ENCODE measurements at regions of chr3 and their contacts with region 1.

Region 1: DNA sequence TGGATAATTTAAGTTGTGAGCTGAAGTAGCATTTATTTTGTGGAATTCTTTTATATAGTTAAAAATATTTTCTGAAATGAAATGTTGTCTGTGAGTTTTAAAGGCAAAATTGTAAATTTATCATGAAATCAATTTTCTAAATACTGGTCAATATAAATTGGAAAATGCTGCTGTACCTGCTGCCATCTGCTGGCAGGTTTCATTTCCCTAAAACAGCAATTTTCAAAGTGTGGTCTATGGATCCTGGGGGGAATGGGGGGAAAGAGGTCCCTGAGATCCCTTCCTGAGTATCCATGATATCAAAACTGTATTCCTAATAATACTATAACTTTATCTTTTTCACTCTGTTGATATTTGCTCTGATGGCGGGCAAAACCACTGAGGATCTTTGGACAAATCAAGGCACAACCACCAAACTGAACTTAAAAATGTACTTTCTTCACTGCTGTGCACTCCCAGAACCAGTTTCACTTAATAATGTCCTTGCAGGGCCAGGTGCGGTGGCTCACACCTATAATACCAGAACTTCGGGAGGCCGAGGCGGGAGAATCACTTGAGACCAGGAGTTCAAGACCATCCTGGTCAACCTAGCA is 17.2 kb upstream of the CCR4 start:
- DNase-seq: peak; percentile 40
- H3K4me3 ChIP-seq: no peak overlapping the region
- H3K27ac ChIP-seq: no peak overlapping the region
- H3K4me1 ChIP-seq: no peaks in the 10 kb centered on the region
- H3K27me3 ChIP-seq: no peaks in the 10 kb centered on the region
- CTCF ChIP-seq: peak; percentile 81

Region 2: GRCh38 chr3:32510075-32510724 is 424.0 kb before region 1 on chr3:
- CTCF ChIA-PET with region 1: interaction called, 6 read pairs
- POLR2A ChIA-PET with region 1: no interaction called
- intact Hi-C with region 1: loop called (anchors 5 kb)
- DNase-seq: peak; percentile 71
- H3K4me3 ChIP-seq: no peak overlapping the region
- H3K27ac ChIP-seq: no peak overlapping the region
- H3K4me1 ChIP-seq: no peaks in the 10 kb centered on the region
- H3K27me3 ChIP-seq: no peaks in the 10 kb centered on the region
- CTCF ChIP-seq: peak; percentile 75

Region 3: DNA sequence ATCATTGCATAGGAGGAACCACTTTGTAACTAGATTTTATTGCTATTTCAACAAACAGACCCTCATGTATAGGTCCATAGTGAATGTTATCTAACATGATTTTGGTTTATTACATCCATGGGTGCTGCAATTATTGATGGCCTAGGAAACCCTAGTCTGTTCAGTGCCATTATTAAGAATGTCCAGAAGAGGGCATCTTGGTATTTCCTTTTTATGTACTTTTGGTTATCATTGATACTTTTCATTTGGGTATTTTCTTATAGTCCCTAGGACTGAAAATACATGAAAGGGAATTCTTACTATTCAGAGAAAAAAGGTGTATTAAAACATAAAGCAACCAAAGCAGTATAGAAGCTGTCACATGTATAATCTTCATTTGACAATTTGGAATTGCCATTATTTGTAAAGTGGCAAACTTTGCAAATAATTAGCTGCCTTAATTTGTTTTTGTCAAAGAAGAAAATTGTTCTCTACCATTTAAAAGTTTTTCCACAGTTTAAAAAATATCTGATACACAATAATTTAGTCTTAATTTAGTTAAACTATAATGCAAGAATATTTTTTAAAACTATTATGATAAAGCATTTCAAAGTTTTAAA is 200.5 kb before region 1 on chr3:
- CTCF ChIA-PET with region 1: no interaction called
- POLR2A ChIA-PET with region 1: no interaction called
- intact Hi-C with region 1: loop called (anchors 1 kb)
- DNase-seq: peak; percentile 57
- H3K4me3 ChIP-seq: no peak overlapping the region
- H3K27ac ChIP-seq: no peak overlapping the region
- H3K4me1 ChIP-seq: no peaks in the 10 kb centered on the region
- H3K27me3 ChIP-seq: no peaks in the 10 kb centered on the region
- CTCF ChIP-seq: peak; percentile 66

Region 4: GRCh38 chr3:32758375-32758753 is 175.9 kb before region 1 on chr3:
- CTCF ChIA-PET with region 1: no interaction called
- POLR2A ChIA-PET with region 1: interaction called, 12 read pairs
- intact Hi-C with region 1: no loop called
- DNase-seq: no peak
- H3K4me3 ChIP-seq: no peak overlapping the region
- H3K27ac ChIP-seq: no peak overlapping the region
- H3K4me1 ChIP-seq: no peaks in the 10 kb centered on the region
- H3K27me3 ChIP-seq: no peaks in the 10 kb centered on the region
- CTCF ChIP-seq: no peak

Region 5: DNA sequence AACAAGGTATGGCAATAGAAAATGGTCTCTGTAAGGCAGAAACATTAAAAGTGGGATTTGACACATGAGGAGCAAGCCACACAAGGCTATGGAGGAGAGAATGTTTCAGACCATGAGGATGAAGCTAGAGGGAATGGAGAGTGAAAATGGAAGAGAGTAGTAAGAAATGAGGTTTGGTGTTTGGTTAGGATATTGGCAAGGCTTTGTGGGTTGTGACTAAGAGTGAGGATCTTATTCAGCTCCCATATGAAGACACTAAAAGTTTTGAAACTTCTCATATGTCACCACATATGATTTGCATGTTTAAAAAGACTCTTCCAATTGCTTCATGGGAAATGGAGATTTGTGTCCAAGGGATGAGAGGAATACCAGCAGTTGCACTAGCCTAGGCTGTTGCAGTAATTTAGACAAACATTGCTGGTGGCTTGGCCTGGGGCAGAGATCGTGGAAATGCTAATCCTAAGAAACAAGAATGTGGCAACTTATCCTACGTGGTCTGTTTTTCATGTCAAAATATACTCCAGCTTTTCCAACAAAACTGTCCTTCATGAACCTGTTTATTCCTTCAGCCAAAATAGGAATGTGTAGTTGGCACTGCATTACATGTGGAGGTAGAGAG is 1613.2 kb after region 1 on chr3:
- CTCF ChIA-PET with region 1: no interaction called
- POLR2A ChIA-PET with region 1: no interaction called
- intact Hi-C with region 1: no loop called
- DNase-seq: no peak
- H3K4me3 ChIP-seq: no peak overlapping the region
- H3K27ac ChIP-seq: no peak overlapping the region
- H3K4me1 ChIP-seq: peaks cover 7% of the 10 kb centered on the region
- H3K27me3 ChIP-seq: no peaks in the 10 kb centered on the region
- CTCF ChIP-seq: no peak

Measured in A673 (cell line).